Activated CD4-positive, alpha-beta T cell treated with anti-CD3 and anti-CD28 coated beads for 36 hours (primary cell): ENCODE measurements at regions of chr13 and their contacts with region 1.

Region 1: DNA sequence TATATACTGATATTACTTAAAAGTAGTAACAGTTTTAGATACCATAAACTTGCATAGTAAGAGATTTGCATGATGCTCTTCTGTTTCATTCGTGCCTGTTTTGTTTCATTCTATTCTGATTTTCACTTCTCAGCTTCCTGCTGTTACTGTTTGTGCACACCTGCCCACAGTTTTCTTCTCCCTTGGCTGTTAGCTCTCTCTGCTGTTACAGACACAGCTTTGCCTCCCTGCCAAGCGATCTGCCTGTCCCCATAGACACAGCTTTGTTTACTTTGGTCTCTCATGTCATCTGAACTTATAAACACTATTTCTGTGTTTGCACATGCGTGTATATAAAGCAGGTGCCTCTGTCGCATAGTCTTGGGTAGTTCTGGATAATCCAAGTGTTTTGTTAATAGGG is 21.4 kb upstream of the UPF3A start:
- DNase-seq: no peak
- ATAC-seq: no peak
- H3K4me3 Mint-ChIP-seq: no peak overlapping the region
- H3K27ac Mint-ChIP-seq: peak overlapping the region; percentile 24
- H3K4me1 Mint-ChIP-seq: peaks cover 22% of the 10 kb centered on the region
- H3K27me3 Mint-ChIP-seq: no peaks in the 10 kb centered on the region

Region 2: DNA sequence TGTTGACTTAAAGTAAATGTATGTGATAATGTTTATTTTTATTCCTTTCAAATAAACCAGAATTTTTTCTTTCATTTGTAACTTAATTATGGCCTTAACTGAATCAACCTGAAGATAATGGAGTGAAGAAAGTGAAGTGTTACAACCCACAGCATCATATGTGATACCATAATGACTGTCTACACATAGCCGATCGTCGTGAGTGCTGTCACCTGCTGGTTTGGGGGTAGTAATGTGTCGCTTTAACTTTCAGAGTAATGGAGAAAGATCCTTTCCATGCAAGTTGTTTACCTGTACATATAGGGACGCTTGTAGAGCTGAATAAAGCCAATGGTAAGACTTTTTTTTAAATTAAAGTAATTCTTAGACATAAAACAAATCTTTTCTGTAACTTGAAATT is 15.3 kb before region 1 on chr13:
- CTCF ChIA-PET with region 1: no interaction called
- POLR2A ChIA-PET with region 1: no interaction called
- intact Hi-C with region 1: loop called in 1 of 2 experiments (anchors 2 kb)
- DNase-seq: no peak
- ATAC-seq: no peak
- H3K4me3 Mint-ChIP-seq: no peak overlapping the region
- H3K27ac Mint-ChIP-seq: no peak overlapping the region
- H3K4me1 Mint-ChIP-seq: peaks cover 4% of the 10 kb centered on the region
- H3K27me3 Mint-ChIP-seq: no peaks in the 10 kb centered on the region

Region 3: GRCh38 chr13:114281351-114282040 is 21.5 kb after region 1 on chr13 and contains the start of gene UPF3A:
- CTCF ChIA-PET with region 1: no interaction called
- POLR2A ChIA-PET with region 1: no interaction called
- intact Hi-C with region 1: no loop called
- DNase-seq: peak; percentile 95
- ATAC-seq: peak; percentile 83
- H3K4me3 Mint-ChIP-seq: peak within 1 kb of the TSS; percentile 84
- H3K27ac Mint-ChIP-seq: peak within 1 kb of the TSS; percentile 99
- H3K4me1 Mint-ChIP-seq: peaks cover 49% of the 10 kb centered on the region
- H3K27me3 Mint-ChIP-seq: no peaks in the 10 kb centered on the region
- total RNA-seq, gene UPF3A: 41.1 to 43.3 TPM